ENCODE measurements at regions of chr3 and their contacts with region 1.

Region 1: DNA sequence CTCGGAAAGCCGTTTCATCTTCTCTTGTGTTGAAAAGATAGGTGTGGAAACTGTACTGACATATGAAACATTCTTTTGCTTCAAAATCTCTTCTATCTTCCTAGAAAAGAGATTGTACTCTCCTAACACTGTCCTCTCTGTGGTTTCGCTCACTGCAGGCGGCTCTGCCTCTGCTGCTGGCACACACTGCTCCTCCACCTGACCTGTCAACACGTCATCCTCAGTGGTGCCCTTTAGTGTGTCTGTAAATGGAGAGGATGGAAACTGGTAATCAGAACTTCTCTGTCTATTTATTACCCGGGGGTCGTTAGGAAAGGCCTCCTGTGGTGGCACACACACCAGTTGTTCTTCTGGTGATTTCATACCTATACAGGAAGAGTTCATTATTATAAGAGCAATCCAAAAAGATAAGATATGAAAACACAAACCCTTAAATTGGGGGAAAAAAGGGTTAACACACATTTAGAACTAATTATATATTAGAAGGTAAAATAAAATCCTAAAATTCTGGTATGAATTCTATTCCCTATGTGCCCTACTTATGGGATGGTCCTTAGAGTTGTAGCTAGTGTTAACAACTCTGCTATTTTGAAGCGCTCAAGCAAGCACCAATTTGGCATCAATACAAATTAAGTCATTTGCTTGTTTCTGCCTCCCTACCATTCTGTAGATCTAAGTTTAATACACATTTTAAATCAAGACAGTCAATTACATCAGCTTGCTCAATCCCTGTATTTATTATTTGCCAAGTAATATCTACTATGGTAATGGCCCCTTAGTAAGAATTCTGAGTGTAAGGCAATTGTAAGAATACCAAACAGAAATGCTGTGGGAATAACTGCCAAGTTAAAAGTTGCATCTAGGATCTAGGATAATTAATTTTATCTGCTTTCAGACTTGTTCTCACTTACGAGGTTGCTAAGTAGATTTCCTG is 49.2 kb downstream of the TASOR start:
- DNase-seq: no peak
- H3K4me3 ChIP-seq: no peak overlapping the region
- H3K27me3 ChIP-seq: no peaks in the 10 kb centered on the region
- CTCF ChIP-seq: no peak

Region 2: GRCh38 chr3:56693750-56694149 is 59.9 kb after region 1 on chr3:
- CTCF ChIA-PET with region 1: no interaction called
- POLR2A ChIA-PET with region 1: no interaction called
- DNase-seq: no peak
- H3K4me3 ChIP-seq: no peak overlapping the region
- H3K27me3 ChIP-seq: no peaks in the 10 kb centered on the region
- CTCF ChIP-seq: no peak

Region 3: DNA sequence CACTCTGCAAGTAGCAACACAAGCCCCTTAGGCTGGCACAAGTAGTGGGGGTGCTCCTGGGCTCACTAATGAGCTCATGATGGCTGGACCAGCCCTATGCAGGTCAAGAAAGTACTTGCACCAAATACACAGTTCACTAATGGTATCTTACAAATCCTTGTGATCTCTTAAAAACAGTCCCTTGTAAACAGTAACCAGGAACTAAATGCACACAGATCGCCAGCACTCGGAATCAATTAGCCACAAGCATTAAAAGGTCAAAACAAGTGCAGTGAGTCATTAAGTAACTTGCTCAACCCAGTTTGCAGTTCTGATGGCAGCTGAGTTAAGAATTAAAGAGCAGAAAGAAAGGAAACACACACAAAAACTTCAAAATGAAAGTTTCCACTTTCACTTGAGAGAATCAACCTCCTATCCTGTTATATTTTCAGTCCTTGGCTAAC is 124.7 kb after region 1 on chr3:
- CTCF ChIA-PET with region 1: no interaction called
- POLR2A ChIA-PET with region 1: interaction called, 14 read pairs
- DNase-seq: peak; percentile 90
- H3K4me3 ChIP-seq: no peak overlapping the region
- H3K27me3 ChIP-seq: no peaks in the 10 kb centered on the region
- CTCF ChIP-seq: no peak

Measured in BJ (cell line).